CD4-positive, alpha-beta memory T cell (primary cell): ENCODE measurements at regions of chr3 and their contacts with region 1.

Region 1: GRCh38 chr3:37996785-37997301 is 6.3 kb downstream of the VILL start:
- DNase-seq: peak; percentile 80 to 85 (median 82)
- H3K4me3 ChIP-seq: no peak overlapping the region
- H3K4me3 Mint-ChIP-seq: peak overlapping the region; percentile 45 to 97 (median 68)
- H3K27ac ChIP-seq: peak overlapping the region; percentile 29
- H3K27ac Mint-ChIP-seq: peak overlapping the region; percentile 87 to 98 (median 96)
- H3K4me1 ChIP-seq: peaks cover 60% of the 10 kb centered on the region
- H3K4me1 Mint-ChIP-seq: peaks cover 53 to 78% (median 63%) of the 10 kb centered on the region in 4 donors
- H3K27me3 ChIP-seq: no peaks in the 10 kb centered on the region
- H3K27me3 Mint-ChIP-seq: no peaks in the 10 kb centered on the region

Region 2: GRCh38 chr3:37855363-37855970 is 141.4 kb before region 1 on chr3:
- CTCF ChIA-PET with region 1: interaction called, 12 read pairs
- POLR2A ChIA-PET with region 1: no interaction called
- intact Hi-C with region 1: no loop called
- DNase-seq: peak; percentile 49 to 64 (median 60)
- H3K4me3 ChIP-seq: no peak overlapping the region
- H3K4me3 Mint-ChIP-seq: no peak overlapping the region
- H3K27ac ChIP-seq: no peak overlapping the region
- H3K27ac Mint-ChIP-seq: peak overlapping the region in 1 of 7 donors; percentile 33
- H3K4me1 ChIP-seq: peaks cover 7% of the 10 kb centered on the region
- H3K4me1 Mint-ChIP-seq: peaks cover 0 to 8% (median 3%) of the 10 kb centered on the region in 4 donors
- H3K27me3 ChIP-seq: no peaks in the 10 kb centered on the region
- H3K27me3 Mint-ChIP-seq: peaks cover 0 to 11% of the 10 kb centered on the region in 2 donors

Region 3: GRCh38 chr3:38029400-38030125 is 32.7 kb after region 1 on chr3 and contains the start of gene PLCD1:
- CTCF ChIA-PET with region 1: interaction called, 12 read pairs
- POLR2A ChIA-PET with region 1: interaction called, 3 read pairs
- intact Hi-C with region 1: no loop called
- DNase-seq: peak; percentile 36 to 62 (median 45)
- H3K4me3 ChIP-seq: peak within 1 kb of the TSS; percentile 29 to 44
- H3K4me3 Mint-ChIP-seq: peak within 1 kb of the TSS; percentile 75 to 89 (median 83)
- H3K27ac ChIP-seq: peak within 1 kb of the TSS; percentile 21
- H3K27ac Mint-ChIP-seq: peak within 1 kb of the TSS; percentile 53 to 94 (median 89)
- H3K4me1 ChIP-seq: peaks cover 41% of the 10 kb centered on the region
- H3K4me1 Mint-ChIP-seq: peaks cover 27 to 57% (median 37%) of the 10 kb centered on the region in 4 donors
- H3K27me3 ChIP-seq: no peaks in the 10 kb centered on the region
- H3K27me3 Mint-ChIP-seq: no peaks in the 10 kb centered on the region
- total RNA-seq, gene PLCD1: 81.2 to 93.9 TPM